Activated T-helper 2 cell treated with anti-CD3 and anti-CD28 coated beads, Interferon-gamma antibody, Interleukin-2, Interleukin-4, amounts not matched to agents 10 μg/mL and 5 μg/mL and 100 μg/mL, durations not matched to agents 14 hours and 24 hours and 36 hours (primary cell): ENCODE measurements at regions of chrX and their contacts with region 1.

Region 1: DNA sequence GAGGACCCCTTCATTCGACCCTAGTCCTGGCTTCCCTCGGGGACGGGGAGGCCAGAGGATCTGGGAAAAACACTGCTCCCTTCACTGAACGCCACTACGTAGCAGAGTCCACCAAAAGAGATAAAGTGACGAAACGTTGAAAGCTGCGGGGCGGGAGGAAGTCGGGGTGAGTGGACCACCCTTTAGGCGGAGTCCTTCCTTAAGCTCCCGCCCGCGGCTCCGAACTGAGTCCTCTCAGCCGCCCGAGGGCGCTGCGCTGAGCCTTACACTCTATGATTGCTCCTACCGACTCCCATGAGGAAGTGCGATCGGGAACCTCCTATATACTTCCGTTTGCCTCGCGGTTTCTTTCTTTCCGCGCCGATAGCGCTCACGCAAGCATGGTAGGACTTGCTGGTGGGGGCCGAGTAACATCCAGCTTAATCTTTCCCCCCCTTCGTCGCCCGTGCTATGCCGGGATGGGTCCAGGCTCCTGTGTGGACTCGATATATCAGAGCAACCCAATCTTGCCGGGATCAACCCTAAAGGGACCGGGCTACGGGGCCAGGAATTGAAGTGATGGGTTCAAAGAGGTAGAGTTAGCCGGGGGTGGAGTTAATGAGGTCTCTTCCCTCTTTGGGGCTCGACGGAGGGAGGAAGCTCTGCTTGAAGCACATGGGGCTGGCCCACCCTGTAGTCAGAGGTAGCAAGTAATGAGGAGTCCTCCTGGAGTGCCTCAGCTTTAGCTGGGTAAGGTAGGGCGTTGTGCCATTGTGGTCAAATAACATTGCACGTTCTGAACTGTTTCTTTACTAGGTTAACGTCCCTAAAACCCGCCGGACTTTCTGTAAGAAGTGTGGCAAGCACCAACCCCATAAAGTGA is at the start of gene RPL36A:
- DNase-seq: peak; percentile 71
- H3K4me3 Mint-ChIP-seq: peak within 1 kb of the TSS; percentile 95
- H3K27ac Mint-ChIP-seq: peak within 1 kb of the TSS; percentile 94
- H3K4me1 Mint-ChIP-seq: peaks cover 18% of the 10 kb centered on the region
- H3K27me3 Mint-ChIP-seq: no peaks in the 10 kb centered on the region
- total RNA-seq, gene RPL36A: 290 and 376 TPM in 2 replicates

Region 2: DNA sequence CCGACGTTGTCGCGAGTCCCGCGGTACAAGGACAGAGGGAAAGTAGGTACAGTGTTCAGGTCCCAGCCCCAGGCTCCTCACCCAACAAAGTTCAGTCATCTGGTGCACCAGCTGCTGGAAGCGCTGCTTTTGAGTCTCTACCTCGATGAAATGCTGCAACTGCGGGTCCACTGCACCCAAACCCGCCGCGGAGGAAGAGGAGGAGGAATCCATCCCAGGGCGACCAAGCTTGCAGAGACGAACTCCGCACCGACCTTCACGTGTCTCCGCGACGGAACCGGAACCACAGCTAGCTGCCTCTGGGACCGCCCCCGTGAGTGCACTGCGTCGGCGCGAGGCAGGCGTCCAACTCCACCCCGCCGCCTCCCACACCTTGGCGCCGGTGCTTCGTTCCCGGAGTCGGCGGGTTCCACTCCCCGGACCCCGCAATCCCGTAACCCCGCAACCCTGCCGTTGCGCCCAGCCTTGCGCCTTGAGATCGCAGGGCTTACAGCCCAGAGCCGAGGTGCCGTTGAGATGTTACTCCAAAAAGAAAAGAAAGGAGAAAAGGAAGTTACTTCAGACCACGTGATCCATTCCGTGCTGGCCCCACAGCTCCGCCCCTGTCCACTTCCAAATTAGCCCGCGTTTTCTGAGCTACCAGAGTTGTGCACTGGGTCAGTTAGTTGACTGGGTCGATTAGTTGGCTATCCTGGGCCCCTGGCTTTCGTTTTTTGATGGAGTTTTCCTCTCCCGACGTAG is 42.3 kb before region 1 on chrX and contains the start of gene TIMM8A:
- intact Hi-C with region 1: loop called (anchors 1 kb)
- DNase-seq: peak; percentile 71
- H3K4me3 Mint-ChIP-seq: peak within 1 kb of the TSS; percentile 88
- H3K27ac Mint-ChIP-seq: peak within 1 kb of the TSS; percentile 84
- H3K4me1 Mint-ChIP-seq: peaks cover 10% of the 10 kb centered on the region
- H3K27me3 Mint-ChIP-seq: no peaks in the 10 kb centered on the region
- total RNA-seq, gene TIMM8A: 25.5 and 27.9 TPM in 2 replicates

Region 3: GRCh38 chrX:101658661-101659491 is 268.0 kb after region 1 on chrX:
- intact Hi-C with region 1: no loop called
- DNase-seq: peak; percentile 30
- H3K4me3 Mint-ChIP-seq: peak overlapping the region; percentile 79
- H3K27ac Mint-ChIP-seq: no peak overlapping the region
- H3K4me1 Mint-ChIP-seq: peaks cover 8% of the 10 kb centered on the region
- H3K27me3 Mint-ChIP-seq: peaks cover 12% of the 10 kb centered on the region